GM13977 (cell line): ENCODE measurements at regions of chr2 and their contacts with region 1.

Region 1: DNA sequence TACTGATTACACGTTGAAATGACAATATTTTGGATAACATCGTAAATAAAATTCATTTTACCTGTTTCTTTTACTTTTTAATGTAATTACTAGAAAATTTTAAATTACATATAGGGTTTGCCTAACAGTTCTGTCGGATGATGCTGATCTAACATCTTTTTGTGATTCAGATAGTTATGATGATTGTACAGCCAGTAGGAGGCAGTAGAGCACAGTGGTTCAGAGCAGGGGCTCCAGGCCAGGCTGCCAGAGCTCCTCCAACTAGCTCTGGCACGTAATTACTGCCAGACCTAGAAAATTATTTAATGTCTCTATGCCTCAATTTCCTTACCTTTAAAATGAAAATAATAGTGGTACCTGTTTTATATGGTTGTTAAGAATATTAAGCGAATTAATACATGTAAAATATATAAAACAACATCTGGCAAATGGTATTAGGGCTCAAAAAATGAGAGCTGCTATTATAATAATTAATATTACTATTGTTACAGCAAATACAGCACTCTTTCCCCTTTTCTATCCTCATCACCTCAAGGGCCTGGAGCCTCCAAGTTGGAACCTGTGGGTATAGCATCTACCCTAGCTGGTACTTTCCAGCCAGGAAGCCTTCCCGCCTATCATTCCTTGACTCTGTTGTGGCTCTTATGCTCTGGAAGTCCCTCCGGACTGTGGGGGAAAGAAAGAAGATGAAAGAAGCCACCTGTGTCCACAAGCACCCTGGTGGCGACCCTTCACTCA is 47.7 kb upstream of the PLA2R1 start:
- DNase-seq: peak; percentile 52
- CTCF ChIP-seq: peak; percentile 80

Region 2: GRCh38 chr2:159531475-159531874 is 578.6 kb before region 1 on chr2:
- in situ Hi-C with region 1: no loop called
- DNase-seq: no peak
- CTCF ChIP-seq: no peak

Region 3: DNA sequence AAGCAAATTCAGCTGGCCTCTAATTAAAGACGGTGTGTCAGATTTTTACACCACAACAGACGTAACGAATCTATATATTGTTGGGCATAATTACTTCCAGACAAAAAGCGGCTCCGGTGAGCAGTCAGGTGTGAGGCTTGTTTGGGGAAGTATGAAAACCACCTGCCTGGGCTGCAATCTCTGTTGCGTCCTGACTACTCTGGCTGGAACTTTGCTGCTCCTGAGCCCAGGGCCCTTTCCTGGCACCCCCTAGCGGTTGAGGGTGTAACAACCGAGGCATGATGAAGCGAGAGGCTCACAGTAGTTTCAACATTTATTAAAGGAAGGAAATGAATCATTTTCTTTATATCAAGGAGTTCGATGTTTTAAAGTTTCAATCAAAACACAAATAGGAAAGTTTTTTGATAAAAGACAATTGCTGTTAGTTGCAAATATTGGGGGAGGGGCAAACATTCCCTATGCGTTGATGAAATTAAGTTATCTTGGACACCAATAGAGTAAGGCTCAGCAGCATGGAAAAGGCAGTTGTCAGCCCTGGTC is 100.6 kb after region 1 on chr2:
- in situ Hi-C with region 1: loop called (anchors 10 kb)
- DNase-seq: peak; percentile 70
- CTCF ChIP-seq: peak; percentile 92